ENCODE measurements at regions of chr19 and their contacts with region 1.

Region 1: GRCh38 chr19:23527797-23528196 is 132.5 kb upstream of the ZNF91 start:
- DNase-seq: peak; percentile 35
- H3K4me3 ChIP-seq: no peak overlapping the region
- H3K27ac ChIP-seq: no peak overlapping the region
- H3K4me1 ChIP-seq: peaks cover 5% of the 10 kb centered on the region
- H3K27me3 ChIP-seq: no peaks in the 10 kb centered on the region
- CTCF ChIP-seq: no peak

Region 2: DNA sequence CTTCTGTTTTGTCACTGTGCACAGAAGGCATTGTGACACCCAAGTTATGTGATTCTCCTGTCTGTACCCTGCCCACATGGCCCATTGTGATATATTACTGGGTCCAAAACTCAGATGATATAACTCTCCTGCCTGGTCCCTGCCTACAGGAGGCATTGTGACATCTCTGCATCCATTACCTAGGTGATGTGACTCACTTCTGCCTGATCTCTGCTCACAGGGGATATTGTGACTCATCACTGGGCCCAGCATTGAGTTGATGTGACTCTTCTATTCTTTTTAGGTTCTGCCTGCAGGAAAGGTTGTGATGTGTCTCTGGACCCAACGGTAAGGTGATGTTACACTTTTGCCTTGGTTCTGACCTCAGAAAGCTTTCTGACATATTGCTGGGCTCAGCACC is 209.7 kb before region 1 on chr19:
- CTCF ChIA-PET with region 1: no interaction called
- dilution Hi-C with region 1: no loop called
- in situ Hi-C with region 1: no loop called
- intact Hi-C with region 1: loop called (anchors 10 kb)
- DNase-seq: peak; percentile 72
- H3K4me3 ChIP-seq: no peak overlapping the region
- H3K27ac ChIP-seq: no peak overlapping the region
- H3K4me1 ChIP-seq: no peaks in the 10 kb centered on the region
- H3K27me3 ChIP-seq: no peaks in the 10 kb centered on the region
- CTCF ChIP-seq: no peak

Region 3: DNA sequence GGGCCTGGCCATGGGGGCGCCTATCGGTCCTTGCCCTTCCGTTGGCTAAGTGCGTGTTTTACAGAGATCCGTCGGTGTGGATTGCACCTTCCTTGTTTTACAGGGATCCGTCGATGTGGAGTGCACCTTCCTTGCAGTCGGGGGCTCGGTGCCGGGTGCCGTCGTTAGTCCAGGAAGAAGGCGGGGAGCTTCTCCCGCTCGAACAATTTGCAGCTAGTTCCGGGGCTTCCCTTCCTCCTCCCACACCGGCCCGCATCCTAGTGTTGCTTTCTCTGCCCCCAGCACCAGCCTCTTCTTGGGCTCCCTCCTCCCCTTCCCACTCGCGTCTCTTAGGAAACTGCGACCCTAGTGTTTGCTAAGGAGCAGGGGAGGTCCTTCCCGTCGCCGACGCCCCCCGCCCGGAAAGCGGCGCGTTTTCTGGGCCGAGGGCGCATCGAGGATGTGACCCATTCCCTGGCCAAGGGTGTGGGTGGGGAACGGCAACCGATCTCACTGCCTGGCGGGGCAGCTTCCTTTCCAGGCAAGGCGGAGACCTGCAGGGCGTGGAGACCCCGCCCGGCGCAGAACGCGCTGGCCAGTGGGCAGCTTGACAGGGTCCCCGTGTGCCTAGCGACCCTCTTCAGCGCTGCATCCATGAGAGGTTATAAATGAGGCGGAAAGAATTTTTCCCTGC is 56.8 kb before region 1 on chr19:
- CTCF ChIA-PET with region 1: no interaction called
- dilution Hi-C with region 1: no loop called
- in situ Hi-C with region 1: no loop called
- intact Hi-C with region 1: no loop called
- DNase-seq: no peak
- H3K4me3 ChIP-seq: peak overlapping the region; percentile 27 to 31 (median 29)
- H3K27ac ChIP-seq: no peak overlapping the region
- H3K4me1 ChIP-seq: peaks cover 3% of the 10 kb centered on the region
- H3K27me3 ChIP-seq: peaks cover 2% of the 10 kb centered on the region
- CTCF ChIP-seq: no peak

Region 4: DNA sequence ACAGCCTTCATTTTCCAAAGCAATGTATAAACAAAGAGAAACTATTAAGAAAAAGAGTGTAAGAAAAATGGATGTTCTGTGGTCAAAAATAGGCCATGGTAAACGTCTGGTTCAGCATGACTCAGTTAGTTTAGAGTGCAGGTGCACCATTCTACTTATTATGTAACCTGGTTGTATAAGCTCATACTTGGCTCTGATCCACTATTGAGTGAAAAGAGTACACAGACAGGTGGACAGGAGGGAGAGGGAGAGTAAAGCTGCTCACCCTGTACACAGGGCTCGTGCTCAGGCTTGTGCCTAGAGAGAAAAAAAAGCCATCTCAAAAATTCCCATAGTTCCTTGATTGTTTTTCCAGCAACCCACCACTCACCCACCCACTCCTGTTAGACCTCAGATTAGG is 46.8 kb before region 1 on chr19:
- CTCF ChIA-PET with region 1: no interaction called
- dilution Hi-C with region 1: no loop called
- in situ Hi-C with region 1: no loop called
- intact Hi-C with region 1: no loop called
- DNase-seq: peak; percentile 91
- H3K4me3 ChIP-seq: no peak overlapping the region
- H3K27ac ChIP-seq: no peak overlapping the region
- H3K4me1 ChIP-seq: peaks cover 4% of the 10 kb centered on the region
- H3K27me3 ChIP-seq: no peaks in the 10 kb centered on the region
- CTCF ChIP-seq: no peak

Region 5: GRCh38 chr19:23549141-23549711 is 21.4 kb after region 1 on chr19:
- CTCF ChIA-PET with region 1: no interaction called
- dilution Hi-C with region 1: no loop called
- in situ Hi-C with region 1: no loop called
- intact Hi-C with region 1: loop called (anchors 1 kb)
- DNase-seq: peak; percentile 72
- H3K4me3 ChIP-seq: no peak overlapping the region
- H3K27ac ChIP-seq: peak overlapping the region; percentile 94
- H3K4me1 ChIP-seq: peaks cover 30% of the 10 kb centered on the region
- H3K27me3 ChIP-seq: no peaks in the 10 kb centered on the region
- CTCF ChIP-seq: no peak

Region 6: DNA sequence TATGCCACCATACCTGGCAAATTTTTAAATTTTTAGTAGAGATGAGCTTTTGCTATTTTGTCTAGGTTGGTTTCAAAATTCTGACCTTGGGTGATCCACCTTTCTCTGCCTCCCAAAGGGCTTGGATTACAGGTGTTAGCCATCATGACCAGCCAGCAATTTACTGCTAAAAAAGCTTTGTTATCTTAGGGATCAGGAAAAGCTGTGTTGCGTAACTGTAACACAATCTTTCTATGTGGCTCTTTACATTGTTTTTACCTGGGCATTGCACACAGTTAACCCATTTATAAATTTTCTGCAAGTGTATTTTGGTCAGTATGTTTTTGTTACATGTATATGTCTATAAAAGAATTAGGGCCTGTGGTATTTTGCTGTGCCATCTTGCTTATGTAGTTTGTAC is 67.8 kb after region 1 on chr19:
- CTCF ChIA-PET with region 1: no interaction called
- dilution Hi-C with region 1: no loop called
- in situ Hi-C with region 1: no loop called
- intact Hi-C with region 1: no loop called
- DNase-seq: no peak
- H3K4me3 ChIP-seq: no peak overlapping the region
- H3K27ac ChIP-seq: no peak overlapping the region
- H3K4me1 ChIP-seq: no peaks in the 10 kb centered on the region
- H3K27me3 ChIP-seq: no peaks in the 10 kb centered on the region
- CTCF ChIP-seq: no peak

Measured in mammary epithelial cell (primary cell).